ENCODE measurements at regions of chr13 and their contacts with region 1.

Region 1: GRCh38 chr13:42812316-42812715 is 30.9 kb downstream of the FAM216B start:
- DNase-seq: no peak
- ATAC-seq: peak; percentile 74

Region 2: GRCh38 chr13:42649141-42649540 is 163.2 kb before region 1 on chr13:
- intact Hi-C with region 1: no loop called
- DNase-seq: no peak
- ATAC-seq: no peak

Region 3: DNA sequence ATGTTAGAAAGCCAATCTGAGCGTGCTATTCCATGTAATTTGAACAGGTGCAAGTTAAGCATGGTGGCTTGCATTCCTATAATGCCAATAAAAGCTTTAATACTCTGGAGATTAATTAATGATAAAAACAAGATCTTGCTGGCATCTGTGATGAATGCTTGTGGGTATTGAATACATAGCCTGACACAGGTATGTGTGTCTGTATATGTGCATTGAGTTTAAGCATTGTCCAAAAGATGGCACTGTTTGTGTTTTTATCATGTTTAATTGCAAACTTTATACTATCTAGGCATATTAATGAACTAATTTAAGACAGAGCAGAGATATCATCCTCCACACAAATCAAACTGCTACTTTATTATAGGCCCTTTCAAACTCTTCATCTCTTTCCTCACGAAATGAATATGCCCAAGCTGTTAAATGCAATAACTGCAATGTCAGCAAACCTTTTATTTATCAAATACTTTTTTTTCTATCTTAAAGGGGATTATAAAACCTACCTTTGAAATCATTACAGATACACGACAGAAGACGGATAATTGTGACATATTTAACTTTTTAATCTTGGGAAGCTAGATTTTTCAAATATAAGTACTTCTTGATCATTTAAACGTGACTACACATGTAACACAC is 151.9 kb before region 1 on chr13:
- intact Hi-C with region 1: loop called (anchors 2 kb)
- DNase-seq: no peak
- ATAC-seq: no peak